Posterior vena cava (tissue), 2 donors: ENCODE measurements at regions of chr13 and their contacts with region 1.

Region 1: GRCh38 chr13:27309967-27310598 is 39.5 kb downstream of the RASL11A start:
- DNase-seq: no peak

Region 2: DNA sequence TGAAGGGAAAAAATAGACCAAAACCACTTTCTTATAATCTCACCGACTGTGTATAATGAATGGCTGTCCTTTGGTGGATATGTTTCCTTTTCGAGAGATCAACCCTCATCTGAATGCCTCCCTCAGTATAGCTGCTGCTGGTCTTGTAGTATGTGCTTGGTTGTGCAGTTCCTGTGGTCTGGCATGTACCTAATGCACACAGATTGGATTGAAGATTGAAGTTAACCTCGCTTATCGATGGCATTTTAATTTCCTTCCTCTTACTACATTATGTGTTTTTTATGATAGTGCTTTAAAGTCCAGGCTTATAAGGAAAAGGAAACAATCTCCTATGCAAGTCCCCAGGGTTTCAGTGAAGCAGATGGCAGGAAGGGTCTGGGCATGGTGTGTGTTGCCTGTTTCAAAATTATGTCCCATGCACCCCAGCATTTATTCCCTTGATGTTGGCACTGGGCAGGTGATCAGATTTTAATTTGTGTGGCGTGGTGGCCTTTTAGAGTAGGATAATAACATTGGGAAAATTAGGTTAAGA is 1592.4 kb before region 1 on chr13:
- intact Hi-C with region 1: loop called in 1 of 2 experiments (anchors 5 kb)
- DNase-seq: no peak